Endothelial cell of umbilical vein (primary cell): ENCODE measurements at regions of chr6 and their contacts with region 1.

Region 1: DNA sequence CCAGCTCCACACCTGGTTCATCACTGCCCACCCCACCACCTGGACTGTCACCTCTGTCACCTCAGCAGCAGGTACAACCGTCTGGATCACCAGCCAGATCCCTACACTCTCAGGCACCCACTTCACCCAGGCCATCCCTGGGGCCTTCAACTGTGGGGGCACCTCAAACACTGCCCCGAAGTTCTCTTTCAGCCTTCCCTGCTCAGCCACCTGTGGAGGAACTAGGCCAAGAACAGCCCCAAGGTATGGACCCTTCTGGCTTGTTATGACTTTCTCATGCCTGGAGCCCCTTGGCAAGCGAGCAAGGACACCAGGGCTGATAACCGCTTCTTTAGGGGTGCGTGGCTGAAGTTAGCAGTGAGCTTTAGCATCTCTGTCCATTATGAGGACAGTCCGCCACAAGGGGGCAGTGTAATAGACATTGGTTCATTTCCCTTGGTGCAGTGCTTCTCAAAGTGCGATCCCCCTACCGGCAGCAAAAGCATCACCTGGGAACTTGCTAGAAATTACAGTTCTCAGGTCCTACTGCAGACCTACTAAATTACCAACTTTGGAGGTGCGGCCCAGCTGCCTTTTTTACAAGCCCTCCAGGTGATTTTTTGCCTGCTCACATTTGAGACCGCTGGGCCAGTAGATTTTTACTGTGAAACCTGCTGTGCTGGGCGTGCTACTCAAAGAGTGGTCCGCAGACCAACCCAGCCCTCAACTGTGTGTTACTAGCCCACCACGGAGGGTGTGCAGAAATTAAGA is 32.5 kb downstream of the PNPLA1 start:
- DNase-seq: peak; percentile 92
- H3K4me3 ChIP-seq: no peak overlapping the region
- H3K27ac ChIP-seq: no peak overlapping the region
- H3K4me1 ChIP-seq: no peaks in the 10 kb centered on the region
- H3K27me3 ChIP-seq: peaks cover 0 to 6% of the 10 kb centered on the region in 2 experiments
- CTCF ChIP-seq: peak; percentile 95 to 98
- POLR2A ChIP-seq: no peak

Region 2: GRCh38 chr6:35948725-35949124 is 353.7 kb before region 1 on chr6:
- CTCF ChIA-PET with region 1: no interaction called
- POLR2A ChIA-PET with region 1: no interaction called
- dilution Hi-C with region 1: no loop called
- intact Hi-C with region 1: no loop called
- DNase-seq: peak; percentile 46
- H3K4me3 ChIP-seq: no peak overlapping the region
- H3K27ac ChIP-seq: no peak overlapping the region
- H3K4me1 ChIP-seq: peaks cover 10% of the 10 kb centered on the region
- H3K27me3 ChIP-seq: no peaks in the 10 kb centered on the region
- CTCF ChIP-seq: peak in 1 of 2 donors; percentile 38
- POLR2A ChIP-seq: no peak

Region 3: DNA sequence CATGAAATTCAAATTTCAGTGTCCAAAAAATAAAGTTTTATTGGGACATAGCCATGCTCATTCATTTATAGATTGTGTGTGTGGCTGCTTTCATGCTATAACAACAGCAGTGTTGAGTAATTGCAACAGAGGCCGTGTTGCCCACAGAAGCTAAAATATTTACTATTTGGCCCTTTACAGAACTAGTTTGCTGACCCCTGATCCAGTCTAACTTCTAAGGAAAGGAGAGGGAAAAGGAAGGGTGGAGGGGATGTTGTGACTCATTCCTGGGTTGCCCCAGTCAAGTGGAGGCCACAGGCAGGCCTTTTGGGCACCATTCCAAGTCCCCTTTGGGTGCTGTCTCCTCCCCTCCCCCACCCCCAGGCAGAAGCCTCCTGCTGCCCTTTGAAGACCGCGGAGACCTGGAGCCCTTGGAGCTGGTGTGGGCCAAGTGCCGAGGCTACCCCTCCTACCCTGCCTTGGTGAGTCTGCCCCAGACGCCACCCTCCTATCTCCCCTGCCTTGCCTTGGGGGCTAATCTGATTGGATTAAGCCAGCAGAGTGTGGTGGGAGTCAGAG is 77.4 kb before region 1 on chr6:
- CTCF ChIA-PET with region 1: interaction called, 21 read pairs
- POLR2A ChIA-PET with region 1: no interaction called
- dilution Hi-C with region 1: no loop called
- intact Hi-C with region 1: no loop called
- DNase-seq: peak; percentile 48
- H3K4me3 ChIP-seq: no peak overlapping the region
- H3K27ac ChIP-seq: no peak overlapping the region
- H3K4me1 ChIP-seq: peaks cover 16% of the 10 kb centered on the region
- H3K27me3 ChIP-seq: no peaks in the 10 kb centered on the region
- CTCF ChIP-seq: no peak
- POLR2A ChIP-seq: no peak

Region 4: GRCh38 chr6:36280467-36280866 is 21.9 kb before region 1 on chr6:
- CTCF ChIA-PET with region 1: interaction called, 79 read pairs
- POLR2A ChIA-PET with region 1: no interaction called
- dilution Hi-C with region 1: no loop called
- intact Hi-C with region 1: no loop called
- DNase-seq: no peak
- H3K4me3 ChIP-seq: no peak overlapping the region
- H3K27ac ChIP-seq: no peak overlapping the region
- H3K4me1 ChIP-seq: no peaks in the 10 kb centered on the region
- H3K27me3 ChIP-seq: peaks cover 51 to 53% of the 10 kb centered on the region in 2 experiments
- CTCF ChIP-seq: no peak
- POLR2A ChIP-seq: no peak

Region 5: DNA sequence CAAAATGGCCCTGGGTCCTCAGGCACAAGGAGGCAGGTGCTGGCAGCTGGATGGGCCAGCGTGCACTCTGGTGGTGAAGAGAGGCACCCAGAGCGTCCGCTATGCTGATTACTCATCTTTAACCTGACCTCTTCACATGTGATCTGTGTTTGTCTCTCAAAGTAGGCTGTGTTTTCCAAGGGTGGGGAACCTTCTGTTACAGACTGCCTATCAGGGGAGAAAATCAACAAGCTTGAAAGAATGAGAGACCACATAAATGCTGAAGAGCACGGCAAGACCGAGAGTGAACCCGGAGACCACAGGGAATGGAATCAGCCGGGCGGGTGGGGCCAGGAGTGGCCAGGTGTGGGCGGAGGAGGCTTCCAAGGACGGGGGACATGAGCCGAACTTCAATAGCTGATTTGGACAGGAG is 18.1 kb after region 1 on chr6:
- CTCF ChIA-PET with region 1: interaction called, 27 read pairs
- POLR2A ChIA-PET with region 1: no interaction called
- dilution Hi-C with region 1: no loop called
- intact Hi-C with region 1: no loop called
- DNase-seq: no peak
- H3K4me3 ChIP-seq: no peak overlapping the region
- H3K27ac ChIP-seq: no peak overlapping the region
- H3K4me1 ChIP-seq: no peaks in the 10 kb centered on the region
- H3K27me3 ChIP-seq: peaks cover 16 to 18% of the 10 kb centered on the region in 2 experiments
- CTCF ChIP-seq: no peak
- POLR2A ChIP-seq: no peak

Region 6: DNA sequence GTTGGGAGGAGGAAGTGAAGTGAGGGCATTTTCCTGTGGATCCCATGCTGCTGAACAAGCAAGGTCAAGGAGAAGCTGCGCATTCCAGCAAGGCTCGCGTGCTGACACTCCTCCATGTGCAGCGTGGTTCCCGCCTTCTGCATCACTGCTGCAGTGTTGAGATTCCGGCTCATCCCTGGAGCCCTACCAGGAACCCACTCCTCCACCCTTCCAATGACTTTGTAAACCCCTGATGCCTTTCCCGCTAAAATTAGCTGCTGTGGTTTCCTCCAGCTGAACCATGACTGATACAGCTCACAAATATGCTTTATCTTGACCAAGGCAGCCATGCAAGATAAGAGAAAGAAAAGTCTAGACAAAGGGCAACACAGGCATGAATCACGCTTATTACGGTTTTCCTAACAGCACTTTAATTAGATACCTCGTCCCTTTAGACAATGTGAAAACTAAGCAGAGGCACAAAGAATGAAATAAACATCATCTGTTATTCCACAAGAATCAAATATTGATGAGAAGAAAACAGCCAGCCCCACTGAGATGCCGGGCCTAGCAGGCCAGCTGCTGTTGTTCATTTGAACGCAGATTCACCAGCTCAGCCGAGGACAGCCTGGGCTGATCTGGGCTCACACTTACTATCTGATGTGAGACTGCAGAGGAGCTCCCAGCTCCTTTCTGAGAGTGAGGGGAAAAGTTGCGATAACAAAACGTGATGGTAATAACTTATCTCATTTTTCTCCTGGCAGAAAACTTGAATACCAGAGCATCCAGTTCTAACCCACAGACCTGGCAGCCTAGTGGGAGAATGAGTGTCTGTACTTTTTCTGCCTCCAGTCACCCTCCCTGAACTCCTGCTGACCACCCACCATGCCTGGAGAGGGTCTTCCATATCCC is 48.5 kb after region 1 on chr6:
- CTCF ChIA-PET with region 1: interaction called, 168 read pairs
- POLR2A ChIA-PET with region 1: no interaction called
- dilution Hi-C with region 1: no loop called
- intact Hi-C with region 1: no loop called
- DNase-seq: peak; percentile 97
- H3K4me3 ChIP-seq: no peak overlapping the region
- H3K27ac ChIP-seq: peak overlapping the region; percentile 98
- H3K4me1 ChIP-seq: peaks cover 31% of the 10 kb centered on the region
- H3K27me3 ChIP-seq: peaks cover 0 to 15% of the 10 kb centered on the region in 2 experiments
- CTCF ChIP-seq: no peak
- POLR2A ChIP-seq: peak; percentile 84

Region 7: DNA sequence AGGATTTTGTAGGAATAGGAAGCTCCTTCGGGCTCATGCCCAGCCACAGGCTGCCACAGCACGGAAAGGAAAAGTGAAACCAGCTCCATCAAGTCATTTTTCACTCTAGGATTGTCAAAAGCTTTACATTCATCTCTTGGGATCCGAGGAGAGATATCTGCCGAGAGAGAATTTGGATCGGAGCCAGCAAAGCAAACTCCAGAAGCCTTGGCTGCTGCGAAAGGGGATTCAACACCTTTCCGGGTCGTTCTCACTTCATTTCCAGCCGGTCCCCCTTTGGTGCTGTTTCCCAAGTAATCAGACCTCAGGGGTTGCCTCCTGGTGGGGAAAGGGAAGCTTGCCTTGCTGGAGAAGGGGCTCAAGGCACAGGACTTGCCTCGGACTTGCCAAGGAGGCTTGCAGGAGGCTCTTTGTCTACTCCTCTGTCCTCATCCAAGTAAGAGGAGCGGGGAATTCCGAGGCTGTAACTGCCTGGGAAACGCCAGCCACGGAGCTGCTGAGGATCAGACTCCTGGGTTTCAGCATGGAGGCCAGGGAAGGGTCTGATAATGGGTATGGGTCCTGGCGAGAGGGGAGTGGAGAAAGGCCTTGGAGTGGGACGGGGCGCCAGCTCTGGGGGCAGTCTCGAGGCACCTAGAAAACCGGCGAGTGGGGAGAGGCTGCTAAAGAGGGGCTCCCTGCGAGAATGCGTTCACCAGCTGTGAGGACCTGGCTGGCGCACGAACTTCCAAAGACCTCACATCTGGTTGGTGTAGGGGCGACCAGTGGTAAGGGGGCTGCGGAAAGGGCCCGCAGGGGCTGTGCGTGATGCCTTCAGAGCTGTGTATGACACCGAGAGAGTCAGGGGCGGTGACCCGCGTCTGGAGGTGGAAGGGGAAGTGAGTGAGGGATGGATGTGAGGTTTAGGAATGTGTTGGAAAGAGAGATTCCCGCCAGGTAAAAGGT is 84.4 kb after region 1 on chr6:
- CTCF ChIA-PET with region 1: interaction called, 11 read pairs
- POLR2A ChIA-PET with region 1: no interaction called
- dilution Hi-C with region 1: no loop called
- intact Hi-C with region 1: no loop called
- DNase-seq: peak; percentile 74
- H3K4me3 ChIP-seq: peak overlapping the region; percentile 42 to 66 (median 61)
- H3K27ac ChIP-seq: peak overlapping the region; percentile 10
- H3K4me1 ChIP-seq: peaks cover 13% of the 10 kb centered on the region
- H3K27me3 ChIP-seq: peaks cover 18 to 21% of the 10 kb centered on the region in 2 experiments
- CTCF ChIP-seq: peak in 1 of 2 donors; percentile 22
- POLR2A ChIP-seq: no peak